MCF 10A (cell line): ENCODE measurements at regions of chr13 and their contacts with region 1.

Region 1: GRCh38 chr13:39684531-39685137 is 29.2 kb downstream of the COG6 start:
- DNase-seq: peak; percentile 39
- H3K4me3 Mint-ChIP-seq: no peak overlapping the region
- H3K27ac Mint-ChIP-seq: no peak overlapping the region
- H3K4me1 Mint-ChIP-seq: no peaks in the 10 kb centered on the region
- H3K27me3 Mint-ChIP-seq: no peaks in the 10 kb centered on the region
- CTCF ChIP-seq: peak; percentile 18

Region 2: DNA sequence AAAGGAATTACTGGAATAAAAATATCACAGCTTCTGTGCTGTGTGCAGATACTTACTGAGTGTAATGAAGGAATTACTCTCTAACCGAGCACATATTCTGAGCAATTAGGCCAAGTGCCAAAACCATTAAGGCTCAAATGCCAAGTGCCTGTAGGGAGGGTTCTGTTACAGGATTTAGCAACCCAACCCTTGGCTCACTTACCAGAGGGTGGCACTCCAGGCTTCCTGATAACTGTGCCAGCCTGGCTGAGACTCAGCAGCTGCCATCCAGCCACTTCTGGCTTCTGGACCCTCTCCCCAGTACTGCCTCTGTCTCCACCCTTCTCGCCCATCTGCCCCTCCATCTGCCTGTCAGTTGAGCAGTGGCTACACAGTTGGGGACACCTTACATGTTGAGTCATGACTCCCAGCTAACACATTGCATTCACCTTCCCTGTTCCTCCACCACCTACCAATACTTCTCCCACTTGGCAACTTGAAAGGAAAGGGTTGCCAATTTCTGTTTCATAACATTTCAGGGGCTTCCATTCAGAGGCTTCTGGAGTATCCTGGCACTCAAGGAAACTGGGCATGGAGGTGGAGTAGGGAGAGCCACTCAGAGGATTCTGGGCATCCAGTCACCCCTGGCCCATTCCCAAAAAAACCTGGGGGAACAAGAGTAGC is 81.3 kb after region 1 on chr13:
- CTCF ChIA-PET with region 1: interaction called, 11 read pairs
- POLR2A ChIA-PET with region 1: no interaction called
- intact Hi-C with region 1: no loop called
- DNase-seq: peak; percentile 91
- H3K4me3 Mint-ChIP-seq: no peak overlapping the region
- H3K27ac Mint-ChIP-seq: no peak overlapping the region
- H3K4me1 Mint-ChIP-seq: peaks cover 32% of the 10 kb centered on the region
- H3K27me3 Mint-ChIP-seq: no peaks in the 10 kb centered on the region
- CTCF ChIP-seq: peak; percentile 48

Region 3: DNA sequence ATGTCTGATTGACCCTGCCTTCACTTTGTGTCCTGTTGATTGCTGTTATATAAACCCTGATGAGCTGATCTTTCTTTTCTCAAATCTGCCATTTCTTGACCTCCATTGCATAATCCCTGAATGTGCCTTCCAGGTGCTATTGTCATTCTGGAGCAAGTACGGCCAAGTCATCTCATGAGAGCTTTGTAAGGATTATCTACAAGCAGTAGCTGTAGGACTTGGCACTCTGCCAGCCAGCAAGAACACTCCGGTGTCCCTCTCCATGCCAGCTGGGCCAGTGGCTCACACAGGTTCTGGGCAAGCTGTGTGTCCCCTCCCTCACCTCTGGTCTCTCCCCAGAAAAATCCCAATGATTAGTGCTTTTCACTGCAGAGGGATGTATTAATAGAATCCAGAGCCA is 633.7 kb after region 1 on chr13:
- CTCF ChIA-PET with region 1: no interaction called
- POLR2A ChIA-PET with region 1: no interaction called
- intact Hi-C with region 1: no loop called
- DNase-seq: peak; percentile 70
- H3K4me3 Mint-ChIP-seq: no peak overlapping the region
- H3K27ac Mint-ChIP-seq: no peak overlapping the region
- H3K4me1 Mint-ChIP-seq: peaks cover 18% of the 10 kb centered on the region
- H3K27me3 Mint-ChIP-seq: no peaks in the 10 kb centered on the region
- CTCF ChIP-seq: no peak